K562 (cell line): ENCODE measurements at regions of chr1 and their contacts with region 1.

Region 1: DNA sequence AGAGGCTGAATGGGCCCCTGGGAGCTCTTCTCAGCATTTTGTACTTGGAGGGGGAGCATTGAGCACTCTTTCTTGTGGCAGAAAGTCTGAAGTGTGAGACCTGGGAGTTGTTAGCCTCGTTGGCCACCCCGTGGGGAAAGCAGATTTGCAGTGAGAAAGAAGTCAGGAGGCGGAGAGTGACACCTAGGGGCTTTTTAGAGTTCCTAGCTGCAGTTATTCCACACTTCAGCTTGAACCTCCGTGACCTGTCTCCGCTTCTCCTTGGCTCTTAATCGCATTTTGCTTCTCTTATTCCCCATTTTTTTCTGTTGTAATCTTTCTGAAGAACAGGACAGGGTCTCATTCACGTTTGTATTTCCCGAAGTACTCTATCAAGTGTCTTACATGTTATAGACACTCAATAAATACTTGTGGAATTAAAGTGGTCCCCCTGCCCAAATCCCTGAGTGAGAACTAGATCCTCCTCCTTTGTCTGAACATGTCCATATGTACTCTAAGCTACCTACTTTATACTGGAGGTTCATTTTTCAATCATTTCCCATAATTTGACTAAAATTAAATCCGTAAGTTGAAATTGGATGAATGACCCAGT is 14.5 kb upstream of the C1orf141 start:
- DNase-seq: peak; percentile 62 to 90 (median 72)
- ATAC-seq: peak; percentile 98
- H3K4me3 ChIP-seq: no peak overlapping the region
- H3K27ac ChIP-seq: peak overlapping the region; percentile 7; the same call in 1 of the 3 replicates
- H3K4me1 ChIP-seq: peaks cover 3 to 6% of the 10 kb centered on the region in 2 experiments; a peak in 2 of 5 replicates
- H3K27me3 ChIP-seq: no peaks in the 10 kb centered on the region
- CTCF ChIP-seq: peak; percentile 84 to 99 (median 99)
- EP300 ChIP-seq: no peak
- POLR2A ChIP-seq: no peak
- RAD21 ChIP-seq: peak; percentile 98

Region 2: DNA sequence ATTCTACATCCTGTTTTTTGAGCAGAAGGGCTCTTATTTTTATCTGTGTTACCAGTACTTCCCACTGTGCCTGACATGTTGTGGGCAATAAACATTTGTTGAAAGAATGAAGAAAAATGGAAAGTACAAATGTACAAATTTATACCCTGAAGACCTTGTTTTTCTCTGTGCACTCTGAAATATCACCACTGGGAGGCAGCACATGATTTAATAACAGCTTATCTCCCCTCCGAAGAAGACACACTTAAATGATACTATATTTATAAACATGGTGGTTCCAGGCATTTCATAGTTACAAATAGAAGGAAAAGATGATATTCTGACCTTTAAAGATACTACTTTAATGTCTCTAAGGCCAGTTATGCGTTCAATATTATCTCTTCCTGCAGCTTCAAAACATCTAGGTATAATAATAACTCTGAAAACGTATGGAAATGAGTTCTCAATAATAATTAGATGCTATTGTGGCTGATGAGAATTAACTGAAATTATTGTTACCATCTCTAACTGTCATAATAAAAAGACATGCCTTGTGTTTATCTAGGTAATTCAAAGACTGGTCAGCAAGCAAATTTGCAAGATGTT is 384.2 kb before region 1 on chr1:
- CTCF ChIA-PET with region 1: interaction called, 28 read pairs
- POLR2A ChIA-PET with region 1: no interaction called
- in situ Hi-C with region 1: loop called (anchors 5 kb)
- intact Hi-C with region 1: loop called (anchors 1 kb)
- DNase-seq: peak; percentile 44 to 72 (median 52)
- ATAC-seq: peak; percentile 85
- H3K4me3 ChIP-seq: no peak overlapping the region
- H3K27ac ChIP-seq: no peak overlapping the region
- H3K4me1 ChIP-seq: peaks cover 0 to 4% of the 10 kb centered on the region in 2 experiments; a peak in 3 of 5 replicates
- H3K27me3 ChIP-seq: no peaks in the 10 kb centered on the region
- CTCF ChIP-seq: peak; percentile 50 to 91 (median 66); a peak in 5 of 6 replicates
- EP300 ChIP-seq: 0 out of 2 replicates have a peak, but pooled peaks have one; percentile 14
- POLR2A ChIP-seq: no peak
- RAD21 ChIP-seq: peak; percentile 91 to 93

Region 3: GRCh38 chr1:66876664-66877063 is 272.6 kb before region 1 on chr1:
- CTCF ChIA-PET with region 1: interaction called, 3 read pairs
- POLR2A ChIA-PET with region 1: no interaction called
- in situ Hi-C with region 1: no loop called
- intact Hi-C with region 1: loop called (anchors 2 kb)
- DNase-seq: peak in 1 of 4 experiments; percentile 14
- ATAC-seq: peak; percentile 85
- H3K4me3 ChIP-seq: no peak overlapping the region
- H3K27ac ChIP-seq: no peak overlapping the region
- H3K4me1 ChIP-seq: no peaks in the 10 kb centered on the region
- H3K27me3 ChIP-seq: no peaks in the 10 kb centered on the region
- CTCF ChIP-seq: peak; percentile 13 to 46 (median 25); a peak in 2 of 6 replicates
- EP300 ChIP-seq: no peak
- POLR2A ChIP-seq: no peak
- RAD21 ChIP-seq: peak in 1 of 2 experiments; percentile 50; a peak in 2 of 4 replicates

Region 4: GRCh38 chr1:66996018-66996682 is 153.1 kb before region 1 on chr1:
- CTCF ChIA-PET with region 1: interaction called, 34 read pairs
- POLR2A ChIA-PET with region 1: no interaction called
- in situ Hi-C with region 1: loop called (anchors 5 kb)
- intact Hi-C with region 1: loop called (anchors 1 kb)
- DNase-seq: peak; percentile 33 to 77 (median 43)
- ATAC-seq: peak; percentile 88
- H3K4me3 ChIP-seq: no peak overlapping the region
- H3K27ac ChIP-seq: no peak overlapping the region
- H3K4me1 ChIP-seq: no peaks in the 10 kb centered on the region
- H3K27me3 ChIP-seq: no peaks in the 10 kb centered on the region
- CTCF ChIP-seq: peak; percentile 88 to 93 (median 92)
- EP300 ChIP-seq: no peak
- POLR2A ChIP-seq: no peak
- RAD21 ChIP-seq: peak; percentile 93 to 96

Region 5: DNA sequence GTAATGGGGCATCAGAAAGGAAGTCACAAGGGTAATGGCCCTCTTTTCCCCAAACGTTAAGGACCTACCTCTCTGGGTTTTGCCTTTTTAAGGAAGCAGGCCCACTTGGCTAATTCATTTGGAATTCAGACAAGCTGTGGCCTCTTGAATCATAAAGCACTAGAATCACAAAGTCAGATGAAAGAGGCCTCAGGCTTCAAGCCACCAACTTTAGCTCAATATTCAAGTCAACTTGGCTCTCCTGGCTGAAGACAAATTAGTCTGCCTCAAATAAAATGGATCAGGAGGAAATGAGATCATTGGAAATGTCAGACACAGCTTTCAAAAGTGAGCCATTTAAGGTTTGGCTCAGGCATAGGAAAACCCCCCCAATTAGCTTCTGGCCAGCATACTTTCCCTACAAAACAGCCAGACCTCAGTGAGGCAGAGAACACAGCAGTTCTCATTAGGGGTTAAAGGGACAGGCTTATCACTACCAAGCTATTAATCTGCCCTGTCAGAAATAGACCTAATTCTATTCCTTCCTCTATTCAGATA is 129.6 kb before region 1 on chr1:
- CTCF ChIA-PET with region 1: no interaction called
- POLR2A ChIA-PET with region 1: no interaction called
- in situ Hi-C with region 1: no loop called
- intact Hi-C with region 1: no loop called
- DNase-seq: no peak
- ATAC-seq: no peak
- H3K4me3 ChIP-seq: no peak overlapping the region
- H3K27ac ChIP-seq: no peak overlapping the region
- H3K4me1 ChIP-seq: no peaks in the 10 kb centered on the region
- H3K27me3 ChIP-seq: no peaks in the 10 kb centered on the region
- CTCF ChIP-seq: no peak
- EP300 ChIP-seq: no peak
- POLR2A ChIP-seq: no peak
- RAD21 ChIP-seq: no peak

Region 6: DNA sequence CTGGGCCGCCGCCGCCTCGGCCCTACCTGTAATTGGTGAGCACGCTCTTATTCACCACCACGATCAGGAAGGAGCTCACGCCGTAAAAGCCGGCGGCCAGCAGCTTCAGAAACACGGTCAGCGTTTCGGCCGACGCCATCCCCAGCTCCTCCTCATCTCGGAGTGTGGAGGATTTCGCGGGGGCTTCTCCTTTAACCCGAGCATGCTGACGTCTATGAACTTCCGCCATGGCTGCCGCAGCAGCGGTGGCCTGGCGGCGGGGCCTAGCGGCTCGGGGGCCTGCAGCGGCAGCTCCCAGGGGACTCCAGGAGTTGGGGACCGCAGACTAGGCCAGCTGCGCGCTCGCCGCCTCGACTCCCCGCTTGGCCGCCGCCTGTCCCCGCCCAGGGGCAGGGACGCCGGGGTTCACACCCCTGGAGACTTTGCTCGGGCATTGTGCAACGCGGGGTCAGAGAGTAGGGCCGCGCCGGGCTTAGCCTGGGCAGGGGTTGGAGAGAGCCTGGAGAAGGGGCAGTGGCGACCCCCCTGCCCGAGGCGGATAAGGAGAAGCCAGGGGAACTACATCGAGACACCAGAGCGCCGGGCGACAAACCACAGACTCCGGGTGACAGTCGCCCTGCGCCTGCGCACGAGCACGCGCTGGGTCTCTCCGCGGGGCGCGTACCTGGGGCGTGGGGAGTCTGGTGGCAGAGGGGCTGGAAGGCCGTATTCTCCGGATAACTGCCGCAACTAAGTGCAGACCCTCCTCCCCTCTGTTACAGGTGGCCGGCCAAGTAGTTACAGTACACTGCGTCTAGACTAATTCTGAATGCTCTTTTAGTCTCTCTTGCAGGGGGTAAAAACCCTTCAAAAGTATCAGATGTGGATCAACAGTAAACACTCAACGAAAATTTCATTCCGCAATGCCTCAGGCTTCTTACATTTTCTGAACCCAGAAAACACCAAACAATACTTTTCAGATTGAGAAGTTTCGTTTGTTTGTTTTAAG is 95.2 kb before region 1 on chr1 and contains the start of gene SLC35D1:
- CTCF ChIA-PET with region 1: no interaction called
- POLR2A ChIA-PET with region 1: interaction called, 5 read pairs
- in situ Hi-C with region 1: no loop called
- intact Hi-C with region 1: loop called (anchors 5 kb)
- DNase-seq: peak; percentile 73 to 86 (median 82)
- ATAC-seq: peak; percentile 84
- H3K4me3 ChIP-seq: peak within 1 kb of the TSS; percentile 71
- H3K27ac ChIP-seq: peak within 1 kb of the TSS; percentile 79
- H3K4me1 ChIP-seq: peaks cover 7 to 15% of the 10 kb centered on the region in 2 experiments; a peak in 3 of 5 replicates
- H3K27me3 ChIP-seq: no peaks in the 10 kb centered on the region
- CTCF ChIP-seq: no peak
- EP300 ChIP-seq: no peak
- POLR2A ChIP-seq: peak; percentile 87
- RAD21 ChIP-seq: no peak
- polyA plus RNA-seq, gene SLC35D1: 2.3 to 3.4 TPM

Region 7: GRCh38 chr1:67214420-67215174 is 65.3 kb after region 1 on chr1:
- CTCF ChIA-PET with region 1: no interaction called
- POLR2A ChIA-PET with region 1: interaction called, 3 read pairs
- in situ Hi-C with region 1: no loop called
- intact Hi-C with region 1: loop called (anchors 5 kb)
- DNase-seq: peak in 1 of 4 experiments; percentile 48
- ATAC-seq: peak; percentile 49
- H3K4me3 ChIP-seq: no peak overlapping the region
- H3K27ac ChIP-seq: no peak overlapping the region
- H3K4me1 ChIP-seq: peaks cover 4 to 13% of the 10 kb centered on the region in 2 experiments; a peak in 1 of 5 replicates
- H3K27me3 ChIP-seq: no peaks in the 10 kb centered on the region
- CTCF ChIP-seq: peak; percentile 47 to 57 (median 51); a peak in 5 of 6 replicates
- EP300 ChIP-seq: no peak
- POLR2A ChIP-seq: no peak
- RAD21 ChIP-seq: peak in 1 of 2 experiments; percentile 37; a peak in 2 of 4 replicates

Region 8: DNA sequence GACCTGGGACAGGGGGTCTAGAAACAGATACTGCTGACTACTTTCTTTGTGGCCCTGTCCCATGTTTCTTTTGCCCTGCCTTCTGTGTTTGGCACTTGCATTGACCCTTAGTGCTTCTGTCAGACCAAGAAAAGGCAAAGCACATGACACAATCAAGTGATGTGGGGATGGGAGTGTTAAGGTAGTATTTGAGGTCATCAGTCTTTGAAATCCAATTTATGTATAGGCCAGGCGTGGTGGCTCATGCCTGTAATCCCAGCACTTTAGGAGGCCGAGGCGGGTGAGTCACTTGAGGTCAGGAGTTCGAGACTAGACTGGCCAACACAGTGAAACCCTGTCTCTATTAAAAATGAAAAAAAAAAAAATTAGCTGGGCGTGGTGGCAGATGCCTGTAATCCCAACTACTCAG is 254.9 kb after region 1 on chr1:
- CTCF ChIA-PET with region 1: no interaction called
- POLR2A ChIA-PET with region 1: no interaction called
- in situ Hi-C with region 1: no loop called
- intact Hi-C with region 1: no loop called
- DNase-seq: no peak
- ATAC-seq: no peak
- H3K4me3 ChIP-seq: no peak overlapping the region
- H3K27ac ChIP-seq: no peak overlapping the region
- H3K4me1 ChIP-seq: no peaks in the 10 kb centered on the region
- H3K27me3 ChIP-seq: no peaks in the 10 kb centered on the region
- CTCF ChIP-seq: no peak
- EP300 ChIP-seq: no peak
- POLR2A ChIP-seq: peak; percentile 30; the same call in 1 of the 2 replicates
- RAD21 ChIP-seq: no peak